ENCODE measurements at regions of chr1 and their contacts with region 1.

Region 1: DNA sequence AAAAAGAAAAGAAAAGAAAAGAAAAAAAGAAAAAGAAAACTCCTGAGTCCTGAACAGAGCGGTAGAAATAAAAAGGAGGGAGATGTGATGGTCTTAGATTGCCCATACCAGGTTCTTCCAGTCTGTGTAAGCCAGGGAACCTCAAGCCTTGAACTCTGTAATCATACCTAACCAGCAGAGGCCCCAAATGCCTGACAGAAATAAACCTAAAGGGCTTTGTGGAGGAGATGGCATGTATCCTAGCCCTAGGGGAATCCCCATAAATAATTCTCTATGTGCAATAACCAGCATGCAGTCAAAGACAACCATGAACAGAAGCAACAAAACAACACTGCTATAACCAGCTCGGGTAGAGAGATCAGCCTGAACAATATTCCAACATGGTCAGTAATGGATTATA is 40.4 kb downstream of the USP48 start:
- DNase-seq: no peak
- H3K4me3 Mint-ChIP-seq: no peak overlapping the region
- H3K27ac Mint-ChIP-seq: no peak overlapping the region
- H3K4me1 Mint-ChIP-seq: peaks cover 25% of the 10 kb centered on the region
- H3K27me3 Mint-ChIP-seq: no peaks in the 10 kb centered on the region

Region 2: GRCh38 chr1:21766210-21766609 is 23.6 kb after region 1 on chr1:
- intact Hi-C with region 1: loop called (anchors 2 kb)
- DNase-seq: no peak
- H3K4me3 Mint-ChIP-seq: no peak overlapping the region
- H3K27ac Mint-ChIP-seq: peak overlapping the region; percentile 90
- H3K4me1 Mint-ChIP-seq: peaks cover 49% of the 10 kb centered on the region
- H3K27me3 Mint-ChIP-seq: no peaks in the 10 kb centered on the region